OCI-LY7 (cell line): ENCODE measurements at regions of chr6 and their contacts with region 1.

Region 1: GRCh38 chr6:24646782-24647181 is 791 bp upstream of the KIAA0319 start:
- DNase-seq: no peak
- H3K4me3 ChIP-seq: peak overlapping the region; percentile 68
- H3K27ac ChIP-seq: no peak overlapping the region
- H3K4me1 ChIP-seq: peaks cover 27% of the 10 kb centered on the region
- CTCF ChIP-seq: no peak

Region 2: DNA sequence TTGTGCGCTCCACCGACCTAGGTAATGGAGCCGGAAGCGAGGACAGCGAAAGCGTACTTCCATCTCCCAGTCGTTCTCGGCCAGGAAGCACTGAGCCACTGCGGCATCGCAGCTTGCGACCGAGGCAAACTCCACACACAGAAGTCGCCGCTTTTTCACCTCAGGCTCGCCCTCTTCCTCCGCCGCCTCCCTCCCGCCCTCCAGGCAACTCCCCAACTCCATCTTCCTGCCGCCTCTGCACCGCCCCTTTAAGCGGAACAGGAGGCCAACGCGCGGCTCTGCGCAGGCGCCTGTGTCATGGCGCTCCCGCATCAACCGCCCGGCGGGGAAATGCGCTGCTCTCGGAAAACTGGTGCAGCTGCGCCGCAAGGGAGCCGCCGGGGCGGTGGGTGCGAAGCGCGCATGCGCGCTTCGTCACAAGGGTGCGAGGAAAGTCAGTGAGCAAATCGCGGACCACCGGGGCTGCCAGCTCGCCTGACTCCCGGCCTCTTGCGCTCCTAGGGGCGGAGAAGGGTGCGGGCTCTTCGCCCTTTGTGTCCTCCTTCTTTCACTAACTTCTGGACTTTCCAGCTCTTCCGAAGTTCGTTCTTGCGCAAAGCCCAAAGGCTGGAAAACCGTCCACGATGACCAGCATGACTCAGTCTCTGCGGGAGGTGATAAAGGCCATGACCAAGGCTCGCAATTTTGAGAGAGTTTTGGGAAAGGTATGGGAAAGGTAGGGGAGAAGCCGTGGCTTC is 20.0 kb after region 1 on chr6 and contains the starts of genes ACOT13 and TDP2:
- CTCF ChIA-PET with region 1: interaction called, 3 read pairs
- POLR2A ChIA-PET with region 1: interaction called, 17 read pairs
- intact Hi-C with region 1: no loop called
- DNase-seq: peak; percentile 98
- H3K4me3 ChIP-seq: peak within 1 kb of the TSS; percentile 98
- H3K27ac ChIP-seq: peak within 1 kb of the TSS; percentile 82
- H3K4me1 ChIP-seq: peaks cover 25% of the 10 kb centered on the region
- CTCF ChIP-seq: peak; percentile 70
- total RNA-seq, gene ACOT13: 4.1 and 6.7 TPM in 2 replicates
- total RNA-seq, gene TDP2: 22.5 and 27.2 TPM in 2 replicates